Heart right ventricle (tissue), 16 donors: ENCODE measurements at regions of chr6 and their contacts with region 1.

Region 1: GRCh38 chr6:75934643-75935472 is 137.6 kb downstream of the IMPG1 start:
- DNase-seq: peak; percentile 16 to 43
- ATAC-seq: peak; percentile 61 to 80 (median 72)
- H3K4me3 ChIP-seq: peak overlapping the region in 9 of 10 donors; percentile 21 to 47 (median 41)
- H3K27ac ChIP-seq: peak overlapping the region in 1 of 10 donors; percentile 2
- H3K4me1 ChIP-seq: peaks cover 0 to 12% (median 8%) of the 10 kb centered on the region in 9 donors
- H3K27me3 ChIP-seq: peaks cover 0 to 16% (median 0%) of the 10 kb centered on the region in 7 donors
- CTCF ChIP-seq: peak; percentile 44 to 83 (median 70)

Region 2: GRCh38 chr6:75893058-75893775 is 41.6 kb before region 1 on chr6:
- intact Hi-C with region 1: no loop called
- DNase-seq: no peak
- ATAC-seq: peak in 1 of 8 donors; percentile 39
- H3K4me3 ChIP-seq: no peak overlapping the region
- H3K27ac ChIP-seq: no peak overlapping the region
- H3K4me1 ChIP-seq: no peaks in the 10 kb centered on the region
- H3K27me3 ChIP-seq: no peaks in the 10 kb centered on the region
- CTCF ChIP-seq: peak; percentile 47 to 80 (median 72)

Region 3: DNA sequence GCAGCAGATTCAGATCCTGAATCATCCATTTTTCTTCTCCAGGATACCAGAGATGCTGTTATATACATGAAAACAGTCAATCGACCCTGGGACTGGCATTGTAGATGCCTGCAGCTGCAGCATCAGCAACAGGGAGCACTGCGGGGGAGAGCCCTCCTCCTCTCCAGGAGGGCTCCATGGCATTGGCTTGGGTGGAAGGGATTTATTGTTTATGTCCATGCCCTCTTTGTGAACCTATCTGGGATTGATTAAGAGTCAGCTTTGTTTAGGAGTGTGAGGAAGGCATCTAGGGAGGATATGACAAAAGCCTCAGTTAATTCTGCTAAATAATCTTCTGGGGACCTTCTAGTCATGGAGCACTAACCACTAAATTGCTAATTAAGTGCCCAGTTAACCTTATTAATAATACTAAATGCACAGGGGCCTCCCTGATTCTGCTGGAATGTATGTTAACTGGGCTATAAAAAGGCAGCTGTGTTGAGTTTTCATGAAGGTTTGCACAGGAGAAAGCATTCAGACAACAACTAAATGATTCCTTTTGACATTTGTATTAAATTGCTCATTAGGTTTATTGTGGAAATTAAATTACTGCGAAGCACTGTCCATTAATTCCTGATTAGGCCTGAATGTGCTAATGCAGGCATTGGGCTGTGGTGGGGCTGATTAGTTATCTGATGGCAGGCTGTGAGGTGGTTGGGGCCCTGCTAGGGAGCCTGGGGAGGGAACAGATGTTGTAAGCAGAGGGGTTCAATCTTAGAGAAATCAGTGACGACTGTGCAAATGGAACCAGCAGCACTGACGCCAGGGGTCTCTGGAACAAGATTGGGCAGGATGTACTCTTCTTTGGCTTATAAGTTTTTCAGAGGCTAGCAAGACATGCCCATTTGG is 80.0 kb after region 1 on chr6:
- intact Hi-C with region 1: no loop called
- DNase-seq: no peak
- ATAC-seq: no peak
- H3K4me3 ChIP-seq: no peak overlapping the region
- H3K27ac ChIP-seq: no peak overlapping the region
- H3K4me1 ChIP-seq: no peaks in the 10 kb centered on the region
- H3K27me3 ChIP-seq: peaks cover 0 to 5% (median 0%) of the 10 kb centered on the region in 7 donors
- CTCF ChIP-seq: no peak

Region 4: DNA sequence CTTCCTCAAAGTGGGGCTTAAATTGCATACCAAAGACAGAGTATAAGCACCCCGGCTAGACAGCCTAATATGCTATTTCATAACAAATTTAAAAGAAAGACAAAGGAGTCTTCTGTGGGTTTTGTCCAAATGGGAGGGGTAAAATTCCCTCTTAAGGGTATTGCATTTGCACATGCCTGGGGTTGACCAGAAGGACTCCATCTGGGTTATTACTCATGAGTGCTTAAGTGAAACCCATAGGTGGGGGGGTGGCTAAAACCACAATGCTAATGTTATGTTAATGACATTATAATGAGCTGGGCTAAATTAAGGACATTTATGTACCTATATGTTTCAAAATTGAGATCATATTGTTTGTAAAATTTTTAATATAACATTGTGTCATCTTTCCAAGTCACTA is 122.6 kb after region 1 on chr6:
- intact Hi-C with region 1: no loop called
- DNase-seq: no peak
- ATAC-seq: no peak
- H3K4me3 ChIP-seq: no peak overlapping the region
- H3K27ac ChIP-seq: no peak overlapping the region
- H3K4me1 ChIP-seq: no peaks in the 10 kb centered on the region
- H3K27me3 ChIP-seq: no peaks in the 10 kb centered on the region
- CTCF ChIP-seq: no peak

Region 5: DNA sequence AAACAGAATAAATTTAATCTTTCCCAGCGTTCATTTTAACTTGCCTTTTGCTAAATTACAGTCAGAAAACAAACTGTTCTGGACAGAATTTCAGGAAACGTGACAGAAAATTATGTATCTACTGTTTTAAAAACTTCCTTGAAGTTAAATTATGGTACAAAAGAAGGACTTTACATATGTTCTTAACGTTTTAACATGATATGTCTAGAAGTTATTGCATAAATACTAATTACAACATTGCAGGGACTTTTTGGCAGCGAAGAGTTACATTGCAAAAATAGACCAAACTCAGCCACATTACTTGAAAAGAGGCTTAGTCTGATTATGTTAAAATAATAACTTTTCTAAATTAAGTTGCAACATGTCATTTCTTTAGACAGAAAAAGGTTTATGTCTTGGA is 279.7 kb after region 1 on chr6:
- intact Hi-C with region 1: no loop called
- DNase-seq: no peak
- ATAC-seq: no peak
- H3K4me3 ChIP-seq: no peak overlapping the region
- H3K27ac ChIP-seq: no peak overlapping the region
- H3K4me1 ChIP-seq: no peaks in the 10 kb centered on the region
- H3K27me3 ChIP-seq: no peaks in the 10 kb centered on the region
- CTCF ChIP-seq: no peak

Region 6: GRCh38 chr6:76351275-76351674 is 416.4 kb after region 1 on chr6:
- intact Hi-C with region 1: loop called in 6 of 10 experiments (anchors 1 to 10 kb)
- DNase-seq: no peak
- ATAC-seq: peak in 3 of 8 donors; percentile 37 to 57 (median 53)
- H3K4me3 ChIP-seq: no peak overlapping the region
- H3K27ac ChIP-seq: no peak overlapping the region
- H3K4me1 ChIP-seq: no peaks in the 10 kb centered on the region
- H3K27me3 ChIP-seq: no peaks in the 10 kb centered on the region
- CTCF ChIP-seq: peak in 7 of 9 donors; percentile 21 to 49 (median 36)

Region 7: GRCh38 chr6:76682842-76683241 is 748.0 kb after region 1 on chr6:
- intact Hi-C with region 1: loop called in 5 of 10 experiments (anchors 10 kb)
- DNase-seq: no peak
- ATAC-seq: no peak
- H3K4me3 ChIP-seq: no peak overlapping the region
- H3K27ac ChIP-seq: no peak overlapping the region
- H3K4me1 ChIP-seq: no peaks in the 10 kb centered on the region
- H3K27me3 ChIP-seq: no peaks in the 10 kb centered on the region
- CTCF ChIP-seq: peak in 8 of 9 donors; percentile 14 to 55 (median 41)

Region 8: GRCh38 chr6:76852776-76853175 is 917.9 kb after region 1 on chr6:
- intact Hi-C with region 1: loop called in 1 of 10 experiments (anchors 10 kb)
- DNase-seq: no peak
- ATAC-seq: no peak
- H3K4me3 ChIP-seq: no peak overlapping the region
- H3K27ac ChIP-seq: no peak overlapping the region
- H3K4me1 ChIP-seq: no peaks in the 10 kb centered on the region
- H3K27me3 ChIP-seq: no peaks in the 10 kb centered on the region
- CTCF ChIP-seq: no peak

Region 9: GRCh38 chr6:76861403-76861802 is 926.5 kb after region 1 on chr6:
- intact Hi-C with region 1: loop called in 3 of 10 experiments (anchors 10 kb)
- DNase-seq: no peak
- ATAC-seq: no peak
- H3K4me3 ChIP-seq: no peak overlapping the region
- H3K27ac ChIP-seq: no peak overlapping the region
- H3K4me1 ChIP-seq: peaks cover 0 to 8% (median 0%) of the 10 kb centered on the region in 9 donors
- H3K27me3 ChIP-seq: no peaks in the 10 kb centered on the region
- CTCF ChIP-seq: peak in 7 of 9 donors; percentile 8 to 44 (median 21)

Region 10: DNA sequence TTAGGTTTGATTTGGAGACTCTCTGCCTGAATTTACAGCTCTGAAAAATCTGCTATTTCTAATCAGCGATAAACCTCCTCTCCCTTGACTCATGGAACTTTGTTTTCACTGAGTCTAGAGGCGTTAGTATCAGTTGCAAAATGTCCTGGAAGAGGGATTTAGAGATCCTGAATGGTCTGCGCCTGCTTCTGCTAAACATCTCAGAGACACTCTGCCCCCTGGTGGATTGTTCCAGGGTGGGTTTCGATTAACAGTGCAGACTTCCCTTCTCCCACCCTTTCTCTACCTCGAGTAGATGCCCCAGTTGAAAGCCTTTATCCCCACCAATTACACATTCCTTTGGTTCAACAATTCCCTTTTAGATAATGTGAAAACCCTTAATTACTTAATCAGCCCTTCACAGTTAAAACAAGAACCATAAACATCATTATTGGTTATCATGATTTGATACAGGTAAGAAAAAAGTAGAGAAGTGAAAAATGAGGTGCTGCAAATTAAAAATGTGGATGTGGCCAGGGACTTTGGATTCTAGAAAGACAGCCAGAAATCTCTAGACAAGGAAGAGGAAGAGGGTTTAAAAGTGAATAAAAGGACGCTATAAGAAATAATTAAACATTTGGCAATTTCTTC is 1523.0 kb after region 1 on chr6:
- intact Hi-C with region 1: loop called in 9 of 10 experiments (anchors 5 to 10 kb)
- DNase-seq: peak; percentile 39 to 76
- ATAC-seq: peak; percentile 79 to 90 (median 84)
- H3K4me3 ChIP-seq: no peak overlapping the region
- H3K27ac ChIP-seq: peak overlapping the region in 4 of 10 donors; percentile 14 to 70 (median 50)
- H3K4me1 ChIP-seq: peaks cover 0 to 11% (median under 1%) of the 10 kb centered on the region in 9 donors
- H3K27me3 ChIP-seq: peaks cover 0 to 26% (median 18%) of the 10 kb centered on the region in 7 donors
- CTCF ChIP-seq: peak; percentile 30 to 79 (median 71)